Esophagus squamous epithelium (tissue), 5 donors: ENCODE measurements at regions of chr7 and their contacts with region 1.

Region 1: GRCh38 chr7:100894860-100895421 is 747 bp downstream of the ACHE start:
- DNase-seq: no peak
- H3K4me3 ChIP-seq: peak overlapping the region; percentile 28 to 68 (median 50)
- H3K27ac ChIP-seq: peak overlapping the region in 3 of 4 donors; percentile 16 to 36 (median 19)
- H3K4me1 ChIP-seq: peaks cover 30 to 56% (median 40%) of the 10 kb centered on the region in 3 donors
- H3K27me3 ChIP-seq: peaks cover 9 to 76% (median 17%) of the 10 kb centered on the region in 4 donors
- CTCF ChIP-seq: peak; percentile 65 to 84 (median 76)
- POLR2A ChIP-seq: no peak

Region 2: GRCh38 chr7:100509231-100509630 is 385.7 kb before region 1 on chr7:
- intact Hi-C with region 1: no loop called
- DNase-seq: no peak
- H3K4me3 ChIP-seq: no peak overlapping the region
- H3K27ac ChIP-seq: peak overlapping the region; percentile 3 to 53 (median 45)
- H3K4me1 ChIP-seq: peaks cover 0 to 13% (median 0%) of the 10 kb centered on the region in 3 donors
- H3K27me3 ChIP-seq: no peaks in the 10 kb centered on the region
- CTCF ChIP-seq: no peak
- POLR2A ChIP-seq: no peak

Region 3: GRCh38 chr7:100781255-100781654 is 113.7 kb before region 1 on chr7:
- intact Hi-C with region 1: no loop called
- DNase-seq: no peak
- H3K4me3 ChIP-seq: no peak overlapping the region
- H3K27ac ChIP-seq: no peak overlapping the region
- H3K4me1 ChIP-seq: no peaks in the 10 kb centered on the region
- H3K27me3 ChIP-seq: peaks cover 0 to 42% (median 0%) of the 10 kb centered on the region in 4 donors
- CTCF ChIP-seq: no peak
- POLR2A ChIP-seq: no peak

Region 4: GRCh38 chr7:101058355-101058754 is 163.4 kb after region 1 on chr7:
- intact Hi-C with region 1: loop called (anchors 5 kb)
- DNase-seq: no peak
- H3K4me3 ChIP-seq: no peak overlapping the region
- H3K27ac ChIP-seq: no peak overlapping the region
- H3K4me1 ChIP-seq: no peaks in the 10 kb centered on the region
- H3K27me3 ChIP-seq: peaks cover 0 to 79% (median 0%) of the 10 kb centered on the region in 4 donors
- CTCF ChIP-seq: no peak
- POLR2A ChIP-seq: no peak